ENCODE measurements at regions of chr19 and their contacts with region 1.

Region 1: GRCh38 chr19:1183534-1184172 is 9.6 kb upstream of the SBNO2 start:
- DNase-seq: no peak
- ATAC-seq: no peak

Region 2: GRCh38 chr19:1122972-1123363 is 60.7 kb before region 1 on chr19:
- intact Hi-C with region 1: loop called (anchors 5 kb)
- DNase-seq: peak; percentile 83
- ATAC-seq: peak; percentile 64

Region 3: GRCh38 chr19:2302319-2303210 is 1118.9 kb after region 1 on chr19:
- intact Hi-C with region 1: no loop called
- DNase-seq: peak; percentile 71
- ATAC-seq: peak; percentile 75